Activated CD8-positive, alpha-beta T cell treated with anti-CD3 and anti-CD28 coated beads for 36 hours (primary cell): ENCODE measurements at regions of chr2 and their contacts with region 1.

Region 1: DNA sequence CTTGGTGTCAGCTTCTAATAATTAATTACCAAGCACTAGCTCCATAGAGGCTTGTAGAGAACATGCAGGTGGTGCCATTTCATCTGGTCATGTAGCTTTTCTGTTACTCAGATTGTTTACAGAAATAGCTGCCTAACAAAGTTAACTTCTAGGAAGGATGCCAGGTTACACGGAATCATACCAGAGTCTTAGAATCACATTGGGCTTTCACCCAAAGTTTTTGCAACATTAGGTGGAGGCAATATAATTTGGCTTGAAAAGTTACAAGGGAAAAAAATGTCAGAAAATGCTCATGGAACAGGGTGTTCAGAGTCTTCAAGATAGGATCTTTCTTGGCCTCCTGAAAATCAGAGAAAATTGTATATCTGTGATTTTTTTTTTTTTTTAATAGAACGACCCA is 135.6 kb downstream of the ARHGAP15 start:
- DNase-seq: no peak
- ATAC-seq: no peak
- H3K4me3 Mint-ChIP-seq: no peak overlapping the region
- H3K27ac Mint-ChIP-seq: no peak overlapping the region
- H3K4me1 Mint-ChIP-seq: peaks cover 54% of the 10 kb centered on the region
- H3K27me3 Mint-ChIP-seq: no peaks in the 10 kb centered on the region
- CTCF ChIP-seq: no peak

Region 2: GRCh38 chr2:142865924-142866323 is 398.9 kb before region 1 on chr2:
- CTCF ChIA-PET with region 1: no interaction called
- POLR2A ChIA-PET with region 1: no interaction called
- intact Hi-C with region 1: no loop called
- DNase-seq: no peak
- ATAC-seq: no peak
- H3K4me3 Mint-ChIP-seq: no peak overlapping the region
- H3K27ac Mint-ChIP-seq: no peak overlapping the region
- H3K4me1 Mint-ChIP-seq: no peaks in the 10 kb centered on the region
- H3K27me3 Mint-ChIP-seq: no peaks in the 10 kb centered on the region
- CTCF ChIP-seq: no peak

Region 3: GRCh38 chr2:143284087-143284675 is 19.3 kb after region 1 on chr2:
- CTCF ChIA-PET with region 1: interaction called, 30 read pairs
- POLR2A ChIA-PET with region 1: no interaction called
- intact Hi-C with region 1: no loop called
- DNase-seq: peak; percentile 38
- ATAC-seq: peak; percentile 85
- H3K4me3 Mint-ChIP-seq: no peak overlapping the region
- H3K27ac Mint-ChIP-seq: peak overlapping the region; percentile 42
- H3K4me1 Mint-ChIP-seq: peaks cover 28% of the 10 kb centered on the region
- H3K27me3 Mint-ChIP-seq: no peaks in the 10 kb centered on the region
- CTCF ChIP-seq: peak; percentile 79